Activated CD4-positive, alpha-beta memory T cell treated with anti-CD3 and anti-CD28 coated beads for 36 hours (primary cell): ENCODE measurements at regions of chr13 and their contacts with region 1.

Region 1: GRCh38 chr13:42991892-42992763 is at the start of gene EPSTI1:
- DNase-seq: peak; percentile 84
- H3K4me3 Mint-ChIP-seq: peak within 1 kb of the TSS; percentile 86
- H3K27ac Mint-ChIP-seq: peak within 1 kb of the TSS; percentile 97
- H3K4me1 Mint-ChIP-seq: peaks cover 43% of the 10 kb centered on the region
- H3K27me3 Mint-ChIP-seq: no peaks in the 10 kb centered on the region
- total RNA-seq, gene EPSTI1: 21.1 to 21.9 TPM

Region 2: DNA sequence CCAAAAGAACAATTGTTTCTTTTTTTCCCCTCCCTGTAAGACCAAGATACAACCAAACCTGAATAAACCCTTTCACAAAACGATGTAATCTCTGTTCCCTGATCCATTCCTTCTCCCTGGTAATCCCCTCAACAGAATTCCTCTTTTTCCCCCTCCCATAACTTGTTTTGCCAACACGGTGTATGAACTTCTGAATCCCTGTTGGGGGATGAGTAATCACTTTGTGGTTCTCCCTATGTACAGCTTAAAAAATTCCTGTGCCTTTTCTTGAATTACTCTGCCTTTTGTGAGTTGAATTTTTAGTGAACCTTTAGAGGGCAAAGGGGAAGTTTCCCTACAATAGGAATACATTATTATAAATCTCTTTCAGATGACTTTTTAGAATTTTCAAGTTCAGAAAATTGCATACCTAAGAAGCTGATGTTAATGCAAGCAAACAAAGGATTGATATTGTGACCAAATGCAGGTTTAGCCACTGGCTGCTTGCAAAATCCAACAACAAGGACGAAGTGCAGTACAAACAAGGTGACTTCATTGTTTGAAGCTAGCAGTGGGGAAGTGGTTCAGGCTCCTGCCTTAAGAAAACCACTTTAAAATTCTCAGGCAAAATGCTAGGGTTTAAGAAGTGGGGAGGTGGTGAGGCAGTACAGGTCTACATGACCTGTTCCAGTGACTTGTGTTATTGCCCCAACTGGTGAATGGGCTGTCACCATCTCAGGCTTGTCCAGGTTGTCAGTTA is 14.9 kb after region 1 on chr13:
- CTCF ChIA-PET with region 1: no interaction called
- POLR2A ChIA-PET with region 1: no interaction called
- intact Hi-C with region 1: no loop called
- DNase-seq: no peak
- H3K4me3 Mint-ChIP-seq: no peak overlapping the region
- H3K27ac Mint-ChIP-seq: no peak overlapping the region
- H3K4me1 Mint-ChIP-seq: no peaks in the 10 kb centered on the region
- H3K27me3 Mint-ChIP-seq: peaks cover 4% of the 10 kb centered on the region

Region 3: DNA sequence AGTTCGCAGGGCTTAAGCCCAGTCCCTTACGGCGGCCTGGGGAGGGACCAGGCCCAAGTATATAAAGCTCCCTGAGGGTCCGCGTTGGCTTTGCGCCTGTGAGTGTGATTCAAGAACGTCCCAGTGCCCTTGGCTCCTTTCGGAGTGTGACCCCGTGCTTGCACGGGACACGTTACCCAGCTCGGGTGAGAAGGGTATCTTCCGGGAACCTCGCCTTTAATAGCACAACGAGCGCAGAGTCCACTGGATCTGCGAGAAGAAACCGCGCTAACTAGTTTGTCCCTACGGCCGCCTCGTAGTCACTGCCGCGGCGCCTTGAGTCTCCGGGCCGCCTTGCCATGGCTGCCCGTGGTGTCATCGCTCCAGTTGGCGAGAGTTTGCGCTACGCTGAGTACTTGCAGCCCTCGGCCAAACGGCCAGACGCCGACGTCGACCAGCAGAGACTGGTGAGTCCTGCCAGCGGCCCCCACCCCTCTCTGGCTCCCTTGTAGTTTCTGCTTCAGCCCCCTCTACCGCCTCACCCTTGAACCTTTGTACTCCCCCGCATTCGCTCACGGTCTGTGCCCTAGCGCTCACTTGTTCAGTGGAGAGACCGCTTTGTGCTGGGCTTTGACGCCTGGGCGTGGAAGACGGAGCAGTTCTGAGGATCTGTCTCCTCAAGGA is 31.3 kb after region 1 on chr13 and contains the start of gene DNAJC15:
- CTCF ChIA-PET with region 1: interaction called, 32 read pairs
- POLR2A ChIA-PET with region 1: interaction called, 16 read pairs
- intact Hi-C with region 1: loop called (anchors 1 kb)
- DNase-seq: peak; percentile 89
- H3K4me3 Mint-ChIP-seq: peak within 1 kb of the TSS; percentile 97
- H3K27ac Mint-ChIP-seq: peak within 1 kb of the TSS; percentile 93
- H3K4me1 Mint-ChIP-seq: peaks cover 30% of the 10 kb centered on the region
- H3K27me3 Mint-ChIP-seq: no peaks in the 10 kb centered on the region
- total RNA-seq, gene DNAJC15: 16.4 to 17.4 TPM

Region 4: GRCh38 chr13:43054803-43055802 is 63.0 kb after region 1 on chr13:
- CTCF ChIA-PET with region 1: interaction called, 3 read pairs
- POLR2A ChIA-PET with region 1: interaction called, 5 read pairs
- intact Hi-C with region 1: loop called (anchors 2 kb)
- DNase-seq: peak; percentile 25
- H3K4me3 Mint-ChIP-seq: no peak overlapping the region
- H3K27ac Mint-ChIP-seq: no peak overlapping the region
- H3K4me1 Mint-ChIP-seq: peaks cover 29% of the 10 kb centered on the region
- H3K27me3 Mint-ChIP-seq: no peaks in the 10 kb centered on the region

Region 5: GRCh38 chr13:43094901-43095300 is 102.8 kb after region 1 on chr13:
- CTCF ChIA-PET with region 1: no interaction called
- POLR2A ChIA-PET with region 1: interaction called, 6 read pairs
- intact Hi-C with region 1: loop called (anchors 2 kb)
- DNase-seq: no peak
- H3K4me3 Mint-ChIP-seq: no peak overlapping the region
- H3K27ac Mint-ChIP-seq: peak overlapping the region; percentile 40
- H3K4me1 Mint-ChIP-seq: peaks cover 22% of the 10 kb centered on the region
- H3K27me3 Mint-ChIP-seq: no peaks in the 10 kb centered on the region

Region 6: GRCh38 chr13:43797869-43798268 is 805.7 kb after region 1 on chr13:
- CTCF ChIA-PET with region 1: interaction called, 4 read pairs
- POLR2A ChIA-PET with region 1: no interaction called
- intact Hi-C with region 1: loop called (anchors 2 kb)
- DNase-seq: no peak
- H3K4me3 Mint-ChIP-seq: no peak overlapping the region
- H3K27ac Mint-ChIP-seq: no peak overlapping the region
- H3K4me1 Mint-ChIP-seq: peaks cover 33% of the 10 kb centered on the region
- H3K27me3 Mint-ChIP-seq: peaks cover 30% of the 10 kb centered on the region

Region 7: DNA sequence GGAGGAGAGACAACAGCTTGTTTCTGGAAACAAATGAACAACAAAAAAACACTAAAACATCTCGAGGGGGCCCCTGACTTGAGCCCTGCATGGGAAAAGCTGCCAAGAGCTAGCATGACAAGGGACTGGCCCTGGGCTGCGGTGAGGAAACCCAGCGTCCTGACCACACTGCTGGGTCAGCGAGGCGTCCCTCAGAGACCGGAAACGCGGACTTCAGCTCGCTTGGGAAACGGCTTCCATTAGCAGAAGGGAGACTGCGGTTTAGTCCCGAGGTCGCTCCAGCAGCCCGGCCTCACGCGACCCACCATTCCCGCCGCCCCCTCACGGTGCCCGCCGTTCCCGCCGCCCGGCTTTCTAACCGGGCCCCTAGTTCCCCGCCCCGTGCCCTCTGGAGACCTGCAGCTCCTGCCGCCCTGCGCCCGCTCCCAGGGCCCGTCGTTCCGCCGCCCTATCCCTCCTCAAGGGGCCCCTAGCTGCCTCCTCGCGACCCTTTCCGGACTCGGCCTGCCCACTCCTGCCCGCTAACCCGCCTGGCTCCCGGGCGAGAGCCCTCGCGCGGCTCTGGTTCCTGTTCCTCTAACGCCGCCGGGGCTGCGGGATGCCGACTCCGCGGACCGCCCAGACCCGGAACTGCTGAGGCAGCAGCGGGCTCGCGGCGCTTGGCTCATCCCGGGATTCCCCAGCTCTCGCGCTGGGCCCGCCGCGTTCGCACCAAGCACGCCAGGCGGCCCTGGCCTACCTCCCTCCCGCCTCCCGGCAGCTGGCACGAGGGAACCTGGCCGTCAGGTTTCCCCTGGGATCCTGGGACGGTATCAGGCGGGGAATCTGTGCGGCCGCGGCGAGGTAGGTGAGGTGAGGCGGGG is 887.0 kb after region 1 on chr13 and contains the start of gene CCDC122:
- CTCF ChIA-PET with region 1: no interaction called
- POLR2A ChIA-PET with region 1: no interaction called
- intact Hi-C with region 1: loop called (anchors 10 kb)
- DNase-seq: peak; percentile 87
- H3K4me3 Mint-ChIP-seq: peak within 1 kb of the TSS; percentile 85
- H3K27ac Mint-ChIP-seq: peak within 1 kb of the TSS; percentile 87
- H3K4me1 Mint-ChIP-seq: peaks cover 23% of the 10 kb centered on the region
- H3K27me3 Mint-ChIP-seq: peaks cover 2% of the 10 kb centered on the region
- total RNA-seq, gene CCDC122: 2.0 to 2.5 TPM